ENCODE measurements at regions of chr11 and their contacts with region 1.

Region 1: GRCh38 chr11:25920356-25920755 is 411.6 kb upstream of the ANO3 start:
- DNase-seq: no peak
- ATAC-seq: no peak
- H3K4me3 ChIP-seq: no peak overlapping the region
- H3K27ac ChIP-seq: no peak overlapping the region
- H3K4me1 ChIP-seq: no peaks in the 10 kb centered on the region
- H3K27me3 ChIP-seq: no peaks in the 10 kb centered on the region
- CTCF ChIP-seq: no peak
- POLR2A ChIP-seq: no peak

Region 2: GRCh38 chr11:25899761-25900160 is 20.6 kb before region 1 on chr11:
- intact Hi-C with region 1: loop called in 1 of 10 experiments (anchors 2 kb)
- DNase-seq: no peak
- ATAC-seq: no peak
- H3K4me3 ChIP-seq: no peak overlapping the region
- H3K27ac ChIP-seq: no peak overlapping the region
- H3K4me1 ChIP-seq: no peaks in the 10 kb centered on the region
- H3K27me3 ChIP-seq: no peaks in the 10 kb centered on the region
- CTCF ChIP-seq: no peak
- POLR2A ChIP-seq: no peak

Measured in heart left ventricle (tissue), 16 donors.